Dendritic cell treated with granulocyte-macrophage colony-stimulating factor and Interleukin-4, amounts not matched to agents 40 ng/mL and 50 ng/mL, for 4 days (primary cell): ENCODE measurements at regions of chr6 and their contacts with region 1.

Region 1: DNA sequence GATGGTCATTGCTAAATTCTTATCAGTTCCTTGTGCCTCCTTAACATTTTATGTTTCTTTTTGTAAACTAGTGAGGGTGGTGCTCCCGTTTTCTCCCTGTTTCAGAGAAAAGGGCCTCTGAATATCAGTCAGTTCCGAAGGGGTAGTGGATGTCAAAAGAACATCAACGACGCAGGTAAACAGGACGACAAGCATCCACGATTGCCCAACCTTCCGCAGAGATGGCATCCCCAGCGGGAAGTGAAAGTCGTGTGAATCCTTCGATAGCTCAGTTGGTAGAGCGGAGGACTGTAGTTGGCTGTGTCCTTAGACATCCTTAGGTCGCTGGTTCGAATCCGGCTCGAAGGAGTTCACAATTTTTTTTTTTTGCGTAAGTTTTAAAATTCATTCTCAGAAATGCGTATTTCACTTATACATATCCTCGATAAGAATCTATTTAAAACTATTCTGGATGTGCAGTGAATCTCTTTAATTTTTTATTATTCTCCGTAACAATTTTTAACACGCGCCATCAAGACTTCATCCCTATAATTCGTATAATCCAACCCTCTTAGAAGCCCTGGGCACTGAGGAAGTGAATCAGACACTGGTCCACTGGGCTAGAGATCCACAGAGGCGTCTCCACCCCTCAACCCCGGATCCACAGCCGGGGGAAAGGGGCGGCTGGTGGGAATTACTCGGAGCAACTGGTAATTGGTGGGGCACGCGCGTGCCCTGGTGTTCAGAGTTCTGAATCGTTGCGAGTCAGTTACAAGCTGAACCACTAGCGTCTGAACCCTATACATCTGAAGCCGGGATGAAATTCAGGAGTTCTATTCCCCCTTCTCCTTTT is 27.9 kb upstream of the ABT1 start:
- H3K4me3 Mint-ChIP-seq: peak overlapping the region; percentile 80
- H3K27ac Mint-ChIP-seq: peak overlapping the region; percentile 76
- H3K4me1 Mint-ChIP-seq: peaks cover 24% of the 10 kb centered on the region
- H3K27me3 Mint-ChIP-seq: peaks cover 2% of the 10 kb centered on the region

Region 2: GRCh38 chr6:26342106-26343004 is 226.5 kb before region 1 on chr6:
- intact Hi-C with region 1: loop called (anchors 5 kb)
- H3K4me3 Mint-ChIP-seq: no peak overlapping the region
- H3K27ac Mint-ChIP-seq: peak overlapping the region; percentile 5
- H3K4me1 Mint-ChIP-seq: peaks cover 20% of the 10 kb centered on the region
- H3K27me3 Mint-ChIP-seq: peaks cover 14% of the 10 kb centered on the region

Region 3: DNA sequence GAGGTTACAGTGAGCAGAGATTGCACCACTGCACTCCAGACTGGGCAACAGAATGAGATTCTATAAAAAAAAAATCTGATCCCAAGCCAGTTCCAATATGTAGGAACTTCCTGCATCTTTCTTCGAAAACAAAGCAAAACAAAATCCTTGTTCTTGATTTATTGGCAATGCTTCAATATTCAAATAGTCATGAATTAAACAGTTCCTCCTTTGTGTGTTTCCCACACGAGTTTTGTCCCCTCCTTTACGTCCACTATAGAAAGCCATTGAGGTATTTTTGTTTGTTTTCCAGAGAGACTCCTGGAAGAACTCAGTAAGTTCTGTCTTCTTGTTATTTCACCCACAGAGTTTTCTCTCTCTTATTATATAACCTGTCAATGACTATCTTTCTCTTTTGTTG is 61.2 kb before region 1 on chr6:
- intact Hi-C with region 1: no loop called
- H3K4me3 Mint-ChIP-seq: no peak overlapping the region
- H3K27ac Mint-ChIP-seq: no peak overlapping the region
- H3K4me1 Mint-ChIP-seq: peaks cover 7% of the 10 kb centered on the region
- H3K27me3 Mint-ChIP-seq: peaks cover 15% of the 10 kb centered on the region

Region 4: DNA sequence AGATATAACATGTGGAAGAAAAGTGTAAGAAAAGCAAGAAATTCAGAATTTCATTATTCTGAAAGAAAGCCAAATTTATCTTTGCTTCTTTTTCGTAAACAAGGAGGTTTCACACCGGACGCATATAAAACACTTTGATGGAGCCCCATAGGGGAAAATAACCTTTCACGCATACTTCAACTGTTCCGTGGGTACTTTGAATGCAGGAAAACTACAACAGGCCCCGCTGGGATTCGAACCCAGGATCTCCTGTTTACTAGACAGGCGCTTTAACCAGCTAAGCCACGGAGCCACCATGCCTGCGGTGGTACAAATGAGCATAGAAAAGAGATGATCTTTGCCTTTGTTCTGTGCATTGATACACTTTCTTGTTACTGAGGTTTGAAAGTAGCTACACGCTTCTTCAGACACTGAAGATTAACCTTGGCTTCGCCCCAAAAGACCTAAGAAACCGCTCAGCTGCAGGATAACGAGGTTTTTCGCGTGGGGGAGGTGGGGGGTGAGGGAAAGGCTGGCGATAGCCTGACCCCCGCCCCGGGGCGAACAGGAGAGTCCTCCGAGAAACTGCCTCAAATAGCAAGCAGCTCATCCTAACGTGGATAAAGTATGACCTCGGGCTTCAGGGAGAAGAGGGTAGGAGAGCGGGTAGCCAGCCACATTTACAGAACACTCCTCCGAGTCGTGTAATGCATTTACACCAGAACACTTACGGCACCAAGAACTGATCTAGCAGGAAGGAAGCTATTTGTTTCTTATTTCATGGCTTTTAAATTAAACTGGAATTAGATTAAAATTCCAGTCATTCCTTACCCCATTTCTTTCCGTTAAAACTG is 35.9 kb before region 1 on chr6:
- intact Hi-C with region 1: loop called (anchors 1 kb)
- H3K4me3 Mint-ChIP-seq: peak overlapping the region; percentile 96
- H3K27ac Mint-ChIP-seq: peak overlapping the region; percentile 85
- H3K4me1 Mint-ChIP-seq: peaks cover 43% of the 10 kb centered on the region
- H3K27me3 Mint-ChIP-seq: no peaks in the 10 kb centered on the region

Region 5: GRCh38 chr6:26553635-26554446 is 15.0 kb before region 1 on chr6:
- intact Hi-C with region 1: loop called (anchors 2 kb)
- H3K4me3 Mint-ChIP-seq: no peak overlapping the region
- H3K27ac Mint-ChIP-seq: no peak overlapping the region
- H3K4me1 Mint-ChIP-seq: peaks cover 15% of the 10 kb centered on the region
- H3K27me3 Mint-ChIP-seq: peaks cover 5% of the 10 kb centered on the region

Region 6: GRCh38 chr6:26581164-26581915 is 12.5 kb after region 1 on chr6:
- intact Hi-C with region 1: no loop called
- H3K4me3 Mint-ChIP-seq: no peak overlapping the region
- H3K27ac Mint-ChIP-seq: no peak overlapping the region
- H3K4me1 Mint-ChIP-seq: peaks cover 15% of the 10 kb centered on the region
- H3K27me3 Mint-ChIP-seq: peaks cover 29% of the 10 kb centered on the region

Region 7: GRCh38 chr6:26596579-26597388 is 28.0 kb after region 1 on chr6 and contains the start of gene ABT1:
- intact Hi-C with region 1: loop called (anchors 1 kb)
- H3K4me3 Mint-ChIP-seq: no peak within 1 kb of the TSS
- H3K27ac Mint-ChIP-seq: no peak within 1 kb of the TSS
- H3K4me1 Mint-ChIP-seq: peaks cover 30% of the 10 kb centered on the region
- H3K27me3 Mint-ChIP-seq: peaks cover 24% of the 10 kb centered on the region